Activated CD8-positive, alpha-beta memory T cell treated with anti-CD3 and anti-CD28 coated beads, Interleukin-2, amount 10 ng/mL, durations not matched to agents 7 days and 5 days (primary cell): ENCODE measurements at regions of chr21 and their contacts with region 1.

Region 1: GRCh38 chr21:46144464-46145070 is 10.8 kb downstream of the FTCD start:
- DNase-seq: no peak
- ATAC-seq: no peak
- H3K4me3 Mint-ChIP-seq: no peak overlapping the region
- H3K27ac Mint-ChIP-seq: peak overlapping the region; percentile 2
- H3K4me1 Mint-ChIP-seq: peaks cover 11% of the 10 kb centered on the region
- H3K27me3 Mint-ChIP-seq: no peaks in the 10 kb centered on the region

Region 2: GRCh38 chr21:45973659-45974072 is 170.9 kb before region 1 on chr21:
- CTCF ChIA-PET with region 1: interaction called, 11 read pairs
- DNase-seq: peak; percentile 83
- ATAC-seq: peak; percentile 87
- H3K4me3 Mint-ChIP-seq: peak overlapping the region; percentile 67
- H3K27ac Mint-ChIP-seq: no peak overlapping the region
- H3K4me1 Mint-ChIP-seq: peaks cover 8% of the 10 kb centered on the region
- H3K27me3 Mint-ChIP-seq: peaks cover 30% of the 10 kb centered on the region

Region 3: DNA sequence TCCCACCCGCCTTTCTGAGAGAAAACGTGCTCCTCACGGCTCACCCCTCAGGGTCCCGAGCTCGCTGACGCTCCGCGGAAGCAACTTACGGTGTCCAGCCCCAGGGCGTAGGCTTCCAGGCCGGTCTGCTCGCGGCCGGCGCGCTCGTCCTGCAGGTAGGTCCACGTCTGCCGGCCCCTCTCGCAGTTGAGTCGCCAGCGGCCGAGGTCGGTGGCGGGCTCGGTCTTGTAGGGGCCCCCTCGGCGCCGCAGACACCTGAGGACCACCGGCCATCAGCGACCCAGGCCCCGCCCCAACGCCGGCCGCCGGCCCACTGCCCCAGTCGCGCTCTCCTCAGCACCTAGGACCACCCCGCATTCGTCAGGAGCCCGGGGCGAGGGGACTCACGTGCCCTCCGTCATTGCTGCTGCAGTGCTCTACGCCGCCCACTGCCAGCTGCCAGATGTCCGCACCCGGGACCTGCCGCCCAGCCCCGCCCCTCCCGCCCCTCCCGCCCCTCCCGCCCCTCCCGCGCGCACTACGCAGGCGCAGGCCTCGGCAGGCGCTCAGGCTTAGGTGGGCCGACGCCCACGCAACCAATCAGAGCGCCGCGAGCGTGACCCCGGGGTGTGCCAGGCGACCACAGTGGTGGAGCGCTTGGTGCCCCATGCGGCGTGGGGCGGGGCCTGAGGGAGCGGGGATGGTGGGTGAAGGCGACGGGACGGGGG is 83.9 kb after region 1 on chr21 and contains the start of gene LSS:
- CTCF ChIA-PET with region 1: interaction called, 10 read pairs
- DNase-seq: peak; percentile 99
- ATAC-seq: peak; percentile 96
- H3K4me3 Mint-ChIP-seq: peak within 1 kb of the TSS; percentile 85
- H3K27ac Mint-ChIP-seq: peak within 1 kb of the TSS; percentile 93
- H3K4me1 Mint-ChIP-seq: peaks cover 47% of the 10 kb centered on the region
- H3K27me3 Mint-ChIP-seq: no peaks in the 10 kb centered on the region
- total RNA-seq, gene LSS: 44.9 to 49.5 TPM

Region 4: GRCh38 chr21:46253610-46254124 is 109.1 kb after region 1 on chr21:
- CTCF ChIA-PET with region 1: interaction called, 14 read pairs
- DNase-seq: peak; percentile 84
- ATAC-seq: peak; percentile 90
- H3K4me3 Mint-ChIP-seq: no peak overlapping the region
- H3K27ac Mint-ChIP-seq: peak overlapping the region; percentile 80
- H3K4me1 Mint-ChIP-seq: peaks cover 37% of the 10 kb centered on the region
- H3K27me3 Mint-ChIP-seq: no peaks in the 10 kb centered on the region

Region 5: DNA sequence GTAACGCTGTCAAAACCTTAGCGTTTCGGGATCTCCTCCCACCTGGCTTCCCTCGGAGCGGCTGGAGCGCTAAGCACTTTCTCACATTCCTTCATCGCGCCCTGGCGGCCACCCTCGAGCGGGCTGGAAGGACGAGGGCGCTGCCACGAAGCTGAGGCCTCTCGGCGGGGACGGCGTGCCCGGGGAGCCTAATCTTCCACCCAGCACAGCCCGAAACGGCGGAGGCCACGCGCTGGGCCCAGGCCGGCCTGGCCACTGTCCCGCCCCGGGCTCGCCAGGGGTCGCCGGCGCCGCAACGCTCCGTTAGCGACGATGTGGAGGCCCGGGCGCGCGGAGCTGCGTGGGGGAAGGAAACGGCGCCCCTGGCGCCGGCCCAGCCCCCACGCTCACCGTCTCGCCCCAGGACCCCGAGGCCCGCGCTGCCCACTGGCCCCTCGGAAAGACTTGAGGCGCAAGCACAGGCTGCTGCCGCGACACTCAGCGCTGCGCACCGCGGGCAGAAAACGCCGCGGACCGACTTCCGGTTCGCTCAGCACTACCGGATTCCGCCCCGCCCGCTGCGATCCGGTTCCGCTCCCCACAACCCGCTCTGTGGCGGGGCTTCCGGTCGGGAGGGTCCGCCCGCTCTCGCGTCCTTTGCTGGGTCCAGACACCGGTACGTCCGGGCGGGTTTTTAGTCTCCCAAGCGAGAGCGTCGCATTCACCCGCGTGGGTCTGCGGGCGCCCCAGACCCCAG is 141.4 kb after region 1 on chr21 and contains the start of gene YBEY:
- CTCF ChIA-PET with region 1: interaction called, 19 read pairs
- DNase-seq: peak; percentile 93
- ATAC-seq: peak; percentile 91
- H3K4me3 Mint-ChIP-seq: peak within 1 kb of the TSS; percentile 83
- H3K27ac Mint-ChIP-seq: peak within 1 kb of the TSS; percentile 93
- H3K4me1 Mint-ChIP-seq: peaks cover 49% of the 10 kb centered on the region
- H3K27me3 Mint-ChIP-seq: no peaks in the 10 kb centered on the region
- total RNA-seq, gene YBEY: 6.9 to 9.1 TPM

Region 6: GRCh38 chr21:46323227-46324128 is 178.9 kb after region 1 on chr21 and contains the start of gene C21orf58:
- CTCF ChIA-PET with region 1: interaction called, 12 read pairs
- DNase-seq: peak; percentile 98
- ATAC-seq: peak; percentile 87
- H3K4me3 Mint-ChIP-seq: peak within 1 kb of the TSS; percentile 94
- H3K27ac Mint-ChIP-seq: peak within 1 kb of the TSS; percentile 95
- H3K4me1 Mint-ChIP-seq: peaks cover 32% of the 10 kb centered on the region
- H3K27me3 Mint-ChIP-seq: no peaks in the 10 kb centered on the region
- total RNA-seq, gene C21orf58: 48.4 to 82.1 TPM